ENCODE measurements at regions of chr16 and their contacts with region 1.

Region 1: GRCh38 chr16:3264137-3265036 is 8.0 kb upstream of the MEFV start:
- DNase-seq: peak; percentile 98
- H3K4me3 ChIP-seq: peak overlapping the region; percentile 69 to 84 (median 78)
- H3K27ac ChIP-seq: peak overlapping the region; percentile 67
- H3K4me1 ChIP-seq: peaks cover 3% of the 10 kb centered on the region
- H3K27me3 ChIP-seq: no peaks in the 10 kb centered on the region
- CTCF ChIP-seq: peak in 1 of 2 donors; percentile 16
- POLR2A ChIP-seq: peak; percentile 92

Region 2: GRCh38 chr16:3188925-3189825 is 75.2 kb before region 1 on chr16:
- CTCF ChIA-PET with region 1: no interaction called
- POLR2A ChIA-PET with region 1: no interaction called
- dilution Hi-C with region 1: no loop called
- intact Hi-C with region 1: loop called (anchors 2 kb)
- DNase-seq: peak; percentile 51
- H3K4me3 ChIP-seq: peak overlapping the region; percentile 21 to 77 (median 49)
- H3K27ac ChIP-seq: no peak overlapping the region
- H3K4me1 ChIP-seq: peaks cover 16% of the 10 kb centered on the region
- H3K27me3 ChIP-seq: peaks cover 2 to 3% of the 10 kb centered on the region in 2 experiments
- CTCF ChIP-seq: no peak
- POLR2A ChIP-seq: no peak

Region 3: GRCh38 chr16:3276679-3277078 is 12.3 kb after region 1 on chr16:
- CTCF ChIA-PET with region 1: interaction called, 28 read pairs
- POLR2A ChIA-PET with region 1: no interaction called
- dilution Hi-C with region 1: no loop called
- intact Hi-C with region 1: no loop called
- DNase-seq: no peak
- H3K4me3 ChIP-seq: no peak overlapping the region
- H3K27ac ChIP-seq: no peak overlapping the region
- H3K4me1 ChIP-seq: no peaks in the 10 kb centered on the region
- H3K27me3 ChIP-seq: peaks cover 19 to 26% of the 10 kb centered on the region in 2 experiments
- CTCF ChIP-seq: no peak
- POLR2A ChIP-seq: no peak

Region 4: DNA sequence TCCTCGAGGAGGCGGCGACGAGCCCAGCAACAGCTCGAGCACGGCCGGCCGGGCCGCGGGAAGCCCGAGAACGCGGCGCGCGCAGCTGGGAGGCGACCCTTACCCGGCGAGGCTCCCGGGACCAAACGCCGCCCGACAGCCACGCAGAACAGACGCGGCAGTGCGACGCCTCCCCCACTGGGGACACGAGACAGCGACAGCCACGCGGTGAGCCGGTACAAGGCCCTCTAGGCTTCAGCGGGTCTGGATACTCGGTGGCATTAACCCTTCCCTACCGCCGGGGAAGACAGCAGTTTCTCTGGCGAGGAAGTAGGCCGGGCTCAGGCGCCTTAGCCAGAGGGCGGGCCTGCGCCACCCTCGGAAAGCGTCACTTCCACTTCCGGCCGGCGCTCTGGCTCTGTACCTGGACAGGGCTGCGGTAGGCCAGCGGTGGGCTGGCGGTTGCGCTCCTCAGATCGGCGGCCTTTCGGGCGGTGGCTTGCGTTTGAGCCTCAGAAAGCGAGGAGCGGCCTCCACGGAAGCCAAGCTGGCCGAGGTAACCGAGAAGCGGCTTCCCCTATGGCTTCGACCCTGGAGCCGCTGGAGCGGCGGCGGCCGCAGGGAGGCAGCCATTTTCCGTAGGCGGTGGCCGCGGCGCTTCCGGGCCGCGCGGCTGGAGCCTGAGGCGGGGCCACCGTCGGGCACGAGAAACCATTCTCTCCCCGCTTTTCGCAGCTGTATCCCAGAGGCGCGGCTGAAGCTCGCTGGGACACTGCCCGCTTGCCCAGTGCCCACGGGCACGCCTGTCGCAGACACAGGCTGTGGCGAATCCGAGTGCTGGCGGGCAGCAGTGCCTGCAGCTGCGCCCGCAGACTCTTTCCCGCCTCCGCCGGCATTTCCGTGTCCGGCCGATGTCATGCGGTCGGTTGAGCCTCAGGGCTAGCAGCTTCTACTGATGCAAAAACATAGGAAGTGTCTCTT is 41.0 kb after region 1 on chr16 and contains the starts of genes TIGD7 and ZNF75A:
- CTCF ChIA-PET with region 1: interaction called, 3 read pairs
- POLR2A ChIA-PET with region 1: no interaction called
- dilution Hi-C with region 1: no loop called
- intact Hi-C with region 1: loop called (anchors 1 kb)
- DNase-seq: peak; percentile 92
- H3K4me3 ChIP-seq: peak within 1 kb of the TSS; percentile 46 to 81 (median 65)
- H3K27ac ChIP-seq: peak within 1 kb of the TSS; percentile 86
- H3K4me1 ChIP-seq: peaks cover 12% of the 10 kb centered on the region
- H3K27me3 ChIP-seq: no peaks in the 10 kb centered on the region
- CTCF ChIP-seq: peak in 1 of 2 donors; percentile 5
- POLR2A ChIP-seq: peak; percentile 97
- total RNA-seq, gene TIGD7: 3.3 and 3.5 TPM in 2 replicates
- total RNA-seq, gene ZNF75A: 28.0 and 28.4 TPM in 2 replicates

Region 5: GRCh38 chr16:3346041-3346440 is 81.7 kb after region 1 on chr16:
- CTCF ChIA-PET with region 1: no interaction called
- POLR2A ChIA-PET with region 1: no interaction called
- dilution Hi-C with region 1: no loop called
- intact Hi-C with region 1: no loop called
- DNase-seq: no peak
- H3K4me3 ChIP-seq: no peak overlapping the region
- H3K27ac ChIP-seq: no peak overlapping the region
- H3K4me1 ChIP-seq: no peaks in the 10 kb centered on the region
- H3K27me3 ChIP-seq: peaks cover 0 to 3% of the 10 kb centered on the region in 2 experiments
- CTCF ChIP-seq: no peak
- POLR2A ChIP-seq: no peak

Region 6: GRCh38 chr16:3457434-3458252 is 193.3 kb after region 1 on chr16:
- CTCF ChIA-PET with region 1: interaction called, 4 read pairs
- POLR2A ChIA-PET with region 1: no interaction called
- dilution Hi-C with region 1: no loop called
- intact Hi-C with region 1: loop called (anchors 1 kb)
- DNase-seq: peak; percentile 88
- H3K4me3 ChIP-seq: peak overlapping the region; percentile 44 to 62 (median 47)
- H3K27ac ChIP-seq: peak overlapping the region; percentile 77
- H3K4me1 ChIP-seq: peaks cover 27% of the 10 kb centered on the region
- H3K27me3 ChIP-seq: no peaks in the 10 kb centered on the region
- CTCF ChIP-seq: peak; percentile 38 to 64
- POLR2A ChIP-seq: peak; percentile 77

Measured in endothelial cell of umbilical vein (primary cell).